GM12878 (cell line): ENCODE measurements at regions of chr3 and their contacts with region 1.

Region 1: DNA sequence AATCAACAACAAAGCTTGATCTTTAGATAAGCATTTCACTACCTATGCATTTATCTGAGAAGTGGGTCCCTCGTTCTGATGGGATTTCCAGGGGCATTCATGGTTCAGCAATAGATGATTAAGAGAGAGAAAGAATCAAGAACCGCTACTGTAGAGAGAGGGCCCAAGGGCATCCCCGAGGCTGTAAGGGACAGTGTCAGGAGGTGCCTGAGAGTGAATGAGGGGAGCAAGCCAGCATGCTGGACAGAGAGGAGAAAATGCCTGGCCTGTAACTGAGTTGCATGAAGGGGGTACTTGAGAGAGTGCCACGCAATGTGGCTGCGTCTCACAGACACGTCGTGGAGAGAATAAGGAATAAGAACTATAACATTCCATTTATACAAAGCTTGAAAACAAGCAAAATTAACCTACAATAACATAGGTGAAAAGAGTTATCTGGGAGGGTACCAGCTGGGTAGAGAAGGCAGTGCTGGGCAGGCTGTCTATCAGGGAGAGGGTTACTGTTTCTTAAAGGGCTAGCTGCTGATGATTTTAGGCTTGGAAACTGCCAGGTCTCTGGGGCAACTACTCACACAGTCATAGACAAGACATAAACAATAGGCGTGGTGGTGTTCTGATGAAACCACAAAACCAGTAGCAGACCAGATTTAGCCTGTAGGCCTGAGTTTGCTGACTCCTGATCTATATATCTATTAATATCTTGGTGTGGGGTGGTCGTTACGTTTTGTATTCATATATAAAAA is 374.6 kb upstream of the CFAP20DC start:
- DNase-seq: no peak
- ATAC-seq: peak; percentile 83
- H3K4me3 ChIP-seq: no peak overlapping the region
- H3K27ac ChIP-seq: no peak overlapping the region
- H3K4me1 ChIP-seq: peaks cover 24% of the 10 kb centered on the region
- H3K27me3 ChIP-seq: no peaks in the 10 kb centered on the region
- CTCF ChIP-seq: no peak
- EP300 ChIP-seq: no peak
- POLR2A ChIP-seq: no peak
- RAD21 ChIP-seq: no peak

Region 2: DNA sequence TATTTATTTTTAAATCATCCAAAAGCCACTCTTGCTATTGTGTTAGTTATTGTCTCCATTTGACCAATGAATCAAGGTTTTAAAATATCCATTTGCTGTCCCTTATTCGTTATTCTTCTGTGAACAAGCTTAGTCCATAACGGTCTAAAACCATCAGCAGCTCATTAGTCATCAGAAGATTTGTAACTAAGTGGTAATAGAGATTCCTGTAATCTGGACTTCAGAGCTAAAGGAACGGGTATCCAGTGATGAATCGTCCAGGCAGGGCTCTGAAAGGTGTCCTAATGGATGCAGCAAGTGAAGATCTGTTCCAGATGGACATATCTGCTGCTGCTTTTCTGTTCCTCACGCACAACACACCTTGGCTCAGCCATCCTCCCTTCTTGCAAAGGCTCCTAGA is 11.9 kb before region 1 on chr3:
- CTCF ChIA-PET with region 1: interaction called, 6 read pairs
- POLR2A ChIA-PET with region 1: interaction called, 5 read pairs
- RAD21 ChIA-PET with region 1: no interaction called
- SMC1A ChIA-PET with region 1: interaction called, 12 read pairs
- in situ Hi-C with region 1: no loop called
- intact Hi-C with region 1: no loop called
- DNase-seq: no peak
- ATAC-seq: no peak
- H3K4me3 ChIP-seq: no peak overlapping the region
- H3K27ac ChIP-seq: no peak overlapping the region
- H3K4me1 ChIP-seq: peaks cover 10% of the 10 kb centered on the region
- H3K27me3 ChIP-seq: no peaks in the 10 kb centered on the region
- CTCF ChIP-seq: no peak
- EP300 ChIP-seq: no peak
- POLR2A ChIP-seq: no peak
- RAD21 ChIP-seq: no peak